GM13977 (cell line): ENCODE measurements at regions of chr10 and their contacts with region 1.

Region 1: DNA sequence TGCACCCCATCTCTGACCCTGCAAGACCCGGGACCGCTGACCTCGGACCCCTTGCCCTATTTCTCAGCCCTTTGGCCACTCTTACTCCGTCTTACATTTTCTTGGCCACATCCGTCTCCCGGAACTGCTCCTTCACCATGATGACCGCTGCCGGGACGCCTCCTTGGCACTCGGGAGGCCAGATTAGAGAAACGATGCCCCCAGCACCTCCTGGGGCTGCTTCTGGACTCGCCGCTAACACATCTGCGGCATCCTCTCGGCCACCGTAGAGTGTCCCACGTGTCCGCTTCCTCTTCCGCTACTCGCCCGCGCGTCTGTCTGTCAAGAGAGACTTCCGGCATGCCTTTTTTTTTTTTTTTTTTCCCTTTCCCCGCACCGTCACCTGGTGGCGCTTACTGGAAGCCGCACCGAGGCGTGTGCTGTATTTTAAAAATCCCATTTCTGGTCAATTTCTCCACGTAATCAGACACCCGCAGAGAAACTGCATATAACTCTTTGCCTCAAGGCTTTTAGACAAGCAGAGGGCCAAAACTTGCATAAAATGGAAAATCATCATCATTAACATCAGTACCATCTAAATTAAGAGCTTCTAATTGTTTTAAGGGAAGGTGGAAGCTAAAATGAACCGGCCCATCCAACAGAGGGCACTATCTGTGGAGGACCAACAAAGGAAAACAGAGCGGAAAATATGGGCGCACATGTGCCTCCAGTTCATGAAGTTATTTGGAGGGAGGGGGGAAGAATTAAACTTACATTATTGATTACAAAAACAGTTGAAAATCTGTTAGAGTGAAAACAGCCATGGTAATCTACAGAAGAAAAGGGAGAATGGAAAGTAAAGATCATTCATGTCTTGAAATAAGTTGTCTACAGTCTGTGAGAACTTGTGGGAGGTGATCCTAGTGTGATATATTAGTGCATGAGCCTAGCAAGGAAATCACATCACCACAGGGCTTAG is at the start of gene POLR3A:
- DNase-seq: peak; percentile 90
- CTCF ChIP-seq: peak; percentile 65

Region 2: DNA sequence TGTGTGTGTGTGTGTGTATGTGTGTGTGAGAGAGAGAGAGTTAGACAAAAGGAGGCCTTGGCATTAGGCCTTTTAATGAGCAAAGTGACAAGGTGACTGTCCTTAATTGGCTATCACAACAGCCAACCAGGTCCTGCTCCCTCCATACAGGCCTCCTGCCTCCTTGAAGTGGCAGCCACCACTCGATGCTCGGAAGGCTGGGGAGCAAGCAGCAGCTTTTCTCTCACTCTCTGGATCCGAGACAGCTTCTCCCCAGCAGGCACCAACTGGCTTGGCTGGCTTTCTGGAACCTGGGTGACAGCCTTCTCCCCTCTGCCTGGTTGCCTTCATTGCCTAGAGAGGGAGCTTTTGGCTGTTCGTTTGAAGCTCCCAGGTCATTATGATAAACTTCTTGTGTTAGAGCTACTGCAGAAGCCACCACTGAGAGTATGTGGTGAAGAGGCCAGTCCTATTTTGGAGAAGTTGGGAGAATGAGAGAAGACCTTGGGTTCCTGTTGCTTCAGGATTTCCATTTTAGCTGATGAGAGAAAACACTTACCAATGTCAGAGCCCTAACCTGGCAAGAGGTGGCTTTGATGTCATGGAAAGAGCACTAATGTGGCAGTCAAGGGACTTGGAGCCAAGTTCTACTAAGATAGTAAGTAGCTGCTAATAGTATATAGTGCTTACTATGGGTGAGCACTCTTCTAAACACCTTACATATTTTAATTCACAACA is 41.8 kb after region 1 on chr10:
- in situ Hi-C with region 1: no loop called
- DNase-seq: no peak
- CTCF ChIP-seq: no peak

Region 3: DNA sequence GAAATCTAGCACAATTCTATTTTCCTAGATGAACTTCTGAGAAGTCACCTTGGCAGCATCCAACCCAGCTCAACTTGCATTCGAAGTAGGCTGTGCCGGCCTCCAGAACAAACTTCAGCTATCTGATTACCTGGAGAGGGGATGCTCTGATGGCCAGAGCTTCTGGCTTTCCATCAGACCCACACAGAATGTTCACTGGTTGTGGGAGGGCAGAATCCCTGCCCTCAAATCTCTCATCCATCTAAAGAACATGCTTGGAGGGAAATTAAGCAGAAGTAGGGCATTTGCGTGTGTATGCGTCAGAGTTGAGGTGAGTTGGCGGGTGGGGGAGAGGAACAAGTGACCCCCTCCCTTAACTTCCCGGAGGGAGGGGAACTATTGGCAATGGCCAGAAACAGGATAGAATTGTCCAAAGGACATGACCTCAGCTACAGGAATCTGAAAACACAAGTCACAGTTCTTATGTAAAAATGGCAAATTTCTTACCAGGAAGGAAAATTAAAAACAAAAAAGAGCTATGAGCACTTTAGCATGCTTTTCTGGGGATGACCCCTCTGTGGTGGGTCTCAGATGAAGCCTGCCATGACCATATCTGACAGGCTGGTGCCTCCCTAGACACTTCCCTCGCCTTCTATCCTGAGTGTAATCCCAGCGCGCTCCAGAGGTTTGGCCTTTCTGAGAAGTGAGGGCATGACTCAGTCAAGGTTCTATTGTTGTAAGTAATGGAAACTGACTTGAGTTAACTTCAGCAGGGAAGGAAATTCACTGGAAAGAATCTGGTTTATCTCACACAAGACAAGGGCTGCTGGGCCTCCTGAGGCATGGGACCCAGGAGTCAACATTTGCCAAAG is 282.9 kb after region 1 on chr10:
- in situ Hi-C with region 1: no loop called
- DNase-seq: no peak
- CTCF ChIP-seq: no peak

Region 4: GRCh38 chr10:79195091-79195923 is 1165.8 kb after region 1 on chr10:
- in situ Hi-C with region 1: loop called (anchors 25 kb)
- DNase-seq: peak; percentile 86
- CTCF ChIP-seq: peak; percentile 99